ENCODE measurements at regions of chr3 and their contacts with region 1.

Region 1: DNA sequence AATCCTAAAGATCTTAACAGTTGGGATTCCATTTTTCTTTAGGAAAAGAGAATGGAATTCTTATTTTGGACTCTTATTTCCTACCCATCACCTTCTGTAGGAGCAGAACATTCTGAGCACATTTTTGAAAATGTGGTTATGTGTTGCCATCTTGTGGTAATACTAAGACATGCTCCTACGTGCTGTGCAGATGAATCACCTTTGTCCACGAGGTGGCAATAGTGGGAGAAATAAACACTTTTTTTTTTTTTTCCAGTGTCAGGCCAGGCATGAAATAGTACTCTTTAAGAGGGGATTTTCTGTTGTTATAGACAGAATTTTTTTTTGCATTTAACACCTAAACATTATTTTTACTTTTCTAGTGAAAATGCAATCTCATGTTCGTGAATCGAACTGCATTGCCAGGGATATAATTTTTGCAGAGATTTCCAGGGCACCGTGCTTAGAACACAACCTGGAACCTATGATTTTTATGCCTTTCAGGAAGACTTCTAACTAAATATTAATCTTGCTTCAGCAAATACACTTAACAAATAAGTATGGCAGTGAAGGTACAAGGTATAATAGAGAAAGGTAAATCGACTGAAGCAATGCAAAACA is 196.6 kb downstream of the GAP43 start:
- DNase-seq: peak; percentile 44 to 88
- ATAC-seq: peak; percentile 92 to 98 (median 95)
- H3K4me3 ChIP-seq: no peak overlapping the region
- H3K4me3 Mint-ChIP-seq: no peak overlapping the region
- H3K27ac ChIP-seq: no peak overlapping the region
- H3K27ac Mint-ChIP-seq: no peak overlapping the region
- H3K4me1 ChIP-seq: no peaks in the 10 kb centered on the region
- H3K4me1 Mint-ChIP-seq: no peaks in the 10 kb centered on the region
- H3K27me3 ChIP-seq: no peaks in the 10 kb centered on the region
- H3K27me3 Mint-ChIP-seq: no peaks in the 10 kb centered on the region
- CTCF ChIP-seq: peak; percentile 100

Region 2: GRCh38 chr3:114827495-114827894 is 992.4 kb before region 1 on chr3:
- intact Hi-C with region 1: loop called (anchors 10 kb)
- DNase-seq: peak in 1 of 2 donors; percentile 52
- ATAC-seq: peak; percentile 39 to 80 (median 72)
- H3K4me3 ChIP-seq: no peak overlapping the region
- H3K4me3 Mint-ChIP-seq: no peak overlapping the region
- H3K27ac ChIP-seq: no peak overlapping the region
- H3K27ac Mint-ChIP-seq: no peak overlapping the region
- H3K4me1 ChIP-seq: no peaks in the 10 kb centered on the region
- H3K4me1 Mint-ChIP-seq: peaks cover 6 to 8% of the 10 kb centered on the region in 2 donors
- H3K27me3 ChIP-seq: no peaks in the 10 kb centered on the region
- H3K27me3 Mint-ChIP-seq: no peaks in the 10 kb centered on the region
- CTCF ChIP-seq: peak; percentile 43

Region 3: GRCh38 chr3:115040673-115041286 is 779.1 kb before region 1 on chr3:
- intact Hi-C with region 1: loop called (anchors 10 kb)
- DNase-seq: peak in 1 of 2 donors; percentile 69
- ATAC-seq: peak in 2 of 3 donors; percentile 53 to 69
- H3K4me3 ChIP-seq: no peak overlapping the region
- H3K4me3 Mint-ChIP-seq: no peak overlapping the region
- H3K27ac ChIP-seq: no peak overlapping the region
- H3K27ac Mint-ChIP-seq: peak overlapping the region in 1 of 2 donors; percentile 10
- H3K4me1 ChIP-seq: no peaks in the 10 kb centered on the region
- H3K4me1 Mint-ChIP-seq: peaks cover 10 to 14% of the 10 kb centered on the region in 2 donors
- H3K27me3 ChIP-seq: no peaks in the 10 kb centered on the region
- H3K27me3 Mint-ChIP-seq: no peaks in the 10 kb centered on the region
- CTCF ChIP-seq: peak; percentile 75

Region 4: DNA sequence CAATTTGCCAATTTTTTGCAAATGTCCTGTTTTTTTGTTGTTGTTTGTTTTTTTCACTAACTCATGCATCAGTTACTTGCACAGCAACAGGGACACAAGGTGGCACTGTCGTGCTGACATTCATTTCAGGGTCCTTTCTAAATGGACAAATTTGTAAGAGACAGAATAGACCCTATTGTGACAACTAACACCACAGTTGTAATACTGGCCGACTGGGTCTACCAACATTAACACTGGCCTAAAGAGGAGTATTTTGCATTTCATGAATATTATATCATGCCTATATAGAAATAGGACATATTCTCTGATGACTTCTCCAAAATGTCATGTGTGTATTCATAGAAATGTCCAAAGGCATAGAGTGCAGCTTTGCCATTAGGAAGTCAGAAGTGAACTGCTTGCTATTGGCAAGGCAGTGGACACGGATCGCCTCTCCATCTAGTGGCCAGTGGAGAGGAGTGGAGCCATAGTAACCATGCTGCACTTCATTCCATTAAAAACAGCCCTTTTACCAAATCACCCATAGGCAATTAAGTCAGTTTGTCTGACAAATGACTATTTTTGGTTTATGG is 727.6 kb before region 1 on chr3:
- intact Hi-C with region 1: loop called (anchors 10 kb)
- DNase-seq: peak; percentile 35 to 81
- ATAC-seq: peak; percentile 64 to 70 (median 67)
- H3K4me3 ChIP-seq: no peak overlapping the region
- H3K4me3 Mint-ChIP-seq: no peak overlapping the region
- H3K27ac ChIP-seq: no peak overlapping the region
- H3K27ac Mint-ChIP-seq: no peak overlapping the region
- H3K4me1 ChIP-seq: no peaks in the 10 kb centered on the region
- H3K4me1 Mint-ChIP-seq: no peaks in the 10 kb centered on the region
- H3K27me3 ChIP-seq: no peaks in the 10 kb centered on the region
- H3K27me3 Mint-ChIP-seq: no peaks in the 10 kb centered on the region
- CTCF ChIP-seq: peak; percentile 79

Region 5: DNA sequence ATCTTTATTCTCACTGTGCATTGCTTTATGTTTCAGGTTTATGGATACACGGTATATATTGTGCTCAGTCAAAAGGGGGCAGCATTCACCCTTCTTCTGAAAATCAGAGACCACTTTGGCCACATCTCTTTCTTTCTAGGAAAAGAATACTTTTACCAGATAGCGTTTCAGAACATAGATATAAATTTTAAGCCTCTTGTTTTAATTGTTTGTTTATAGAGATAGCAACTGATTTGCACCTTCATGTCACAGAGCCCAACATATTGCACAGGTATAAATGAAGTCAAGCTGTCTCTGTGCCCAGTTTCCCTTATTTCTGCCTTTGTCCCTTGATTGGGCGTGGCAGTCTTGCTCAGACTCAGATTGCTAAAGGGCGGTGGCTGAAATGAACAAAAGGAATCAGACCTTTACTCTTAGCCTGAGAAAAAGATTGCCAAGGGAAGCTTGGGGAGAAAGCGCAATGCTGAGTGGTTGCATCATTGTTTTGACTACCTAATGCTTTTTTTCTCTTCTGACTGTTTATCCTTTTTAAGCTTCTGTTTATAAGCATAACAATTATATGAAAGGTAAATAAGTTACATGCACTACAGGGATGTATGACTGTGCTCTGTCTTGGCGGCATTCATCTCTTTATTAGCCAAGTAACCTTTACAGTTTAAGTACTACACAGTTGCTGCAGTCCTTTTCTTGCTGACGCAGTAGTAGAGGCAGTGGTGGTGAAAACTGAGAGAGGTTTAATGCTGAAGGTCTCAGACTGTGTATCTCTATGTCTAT is 602.0 kb before region 1 on chr3:
- intact Hi-C with region 1: loop called (anchors 5 kb)
- DNase-seq: peak in 1 of 2 donors; percentile 50
- ATAC-seq: peak in 1 of 3 donors; percentile 52
- H3K4me3 ChIP-seq: no peak overlapping the region
- H3K4me3 Mint-ChIP-seq: no peak overlapping the region
- H3K27ac ChIP-seq: no peak overlapping the region
- H3K27ac Mint-ChIP-seq: no peak overlapping the region
- H3K4me1 ChIP-seq: no peaks in the 10 kb centered on the region
- H3K4me1 Mint-ChIP-seq: no peaks in the 10 kb centered on the region
- H3K27me3 ChIP-seq: no peaks in the 10 kb centered on the region
- H3K27me3 Mint-ChIP-seq: peaks cover 9 to 35% of the 10 kb centered on the region in 2 donors
- CTCF ChIP-seq: peak; percentile 21

Region 6: GRCh38 chr3:115804722-115805121 is 15.2 kb before region 1 on chr3:
- intact Hi-C with region 1: no loop called
- DNase-seq: no peak
- ATAC-seq: no peak
- H3K4me3 ChIP-seq: no peak overlapping the region
- H3K4me3 Mint-ChIP-seq: no peak overlapping the region
- H3K27ac ChIP-seq: no peak overlapping the region
- H3K27ac Mint-ChIP-seq: no peak overlapping the region
- H3K4me1 ChIP-seq: no peaks in the 10 kb centered on the region
- H3K4me1 Mint-ChIP-seq: no peaks in the 10 kb centered on the region
- H3K27me3 ChIP-seq: peaks cover 8% of the 10 kb centered on the region
- H3K27me3 Mint-ChIP-seq: peaks cover 13 to 50% of the 10 kb centered on the region in 2 donors
- CTCF ChIP-seq: no peak

Region 7: DNA sequence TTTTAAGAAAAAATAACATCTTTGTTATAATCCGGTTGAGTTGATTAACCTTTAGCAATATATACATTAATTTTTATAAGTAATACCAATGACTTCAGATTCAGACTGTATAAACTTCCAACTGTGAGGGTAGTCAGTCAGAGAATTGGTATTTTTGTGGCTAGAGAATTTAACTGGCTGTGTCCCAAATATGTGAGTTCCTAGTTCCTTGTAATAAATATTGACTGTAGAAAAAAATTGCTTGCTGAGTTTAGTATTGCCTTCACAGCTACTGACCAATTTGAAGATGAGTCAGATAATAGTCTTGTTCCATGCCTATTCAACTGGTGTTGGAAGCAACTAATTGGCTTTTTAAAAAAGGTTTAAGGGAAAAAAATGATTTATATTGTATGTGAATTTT is 14.2 kb after region 1 on chr3:
- intact Hi-C with region 1: no loop called
- DNase-seq: no peak
- ATAC-seq: no peak
- H3K4me3 ChIP-seq: no peak overlapping the region
- H3K4me3 Mint-ChIP-seq: no peak overlapping the region
- H3K27ac ChIP-seq: no peak overlapping the region
- H3K27ac Mint-ChIP-seq: no peak overlapping the region
- H3K4me1 ChIP-seq: no peaks in the 10 kb centered on the region
- H3K4me1 Mint-ChIP-seq: no peaks in the 10 kb centered on the region
- H3K27me3 ChIP-seq: no peaks in the 10 kb centered on the region
- H3K27me3 Mint-ChIP-seq: peaks cover 10 to 15% of the 10 kb centered on the region in 2 donors
- CTCF ChIP-seq: no peak

Region 8: GRCh38 chr3:115968871-115969270 is 149.0 kb after region 1 on chr3:
- intact Hi-C with region 1: no loop called
- DNase-seq: no peak
- ATAC-seq: no peak
- H3K4me3 ChIP-seq: no peak overlapping the region
- H3K4me3 Mint-ChIP-seq: no peak overlapping the region
- H3K27ac ChIP-seq: no peak overlapping the region
- H3K27ac Mint-ChIP-seq: no peak overlapping the region
- H3K4me1 ChIP-seq: no peaks in the 10 kb centered on the region
- H3K4me1 Mint-ChIP-seq: no peaks in the 10 kb centered on the region
- H3K27me3 ChIP-seq: no peaks in the 10 kb centered on the region
- H3K27me3 Mint-ChIP-seq: no peaks in the 10 kb centered on the region
- CTCF ChIP-seq: no peak